Activated CD8-positive, alpha-beta T cell treated with anti-CD3 and anti-CD28 coated beads for 36 hours (primary cell): ENCODE measurements at regions of chr12 and their contacts with region 1.

Region 1: GRCh38 chr12:14995583-14996425 is 23.0 kb downstream of the PDE6H start:
- DNase-seq: no peak
- ATAC-seq: peak; percentile 51
- H3K4me3 Mint-ChIP-seq: no peak overlapping the region
- H3K27ac Mint-ChIP-seq: peak overlapping the region; percentile 61
- H3K4me1 Mint-ChIP-seq: peaks cover 24% of the 10 kb centered on the region
- H3K27me3 Mint-ChIP-seq: no peaks in the 10 kb centered on the region
- CTCF ChIP-seq: peak; percentile 61

Region 2: GRCh38 chr12:14723763-14724162 is 272.0 kb before region 1 on chr12:
- CTCF ChIA-PET with region 1: interaction called, 21 read pairs
- POLR2A ChIA-PET with region 1: no interaction called
- intact Hi-C with region 1: loop called (anchors 5 kb)
- DNase-seq: peak; percentile 70
- ATAC-seq: peak; percentile 77
- H3K4me3 Mint-ChIP-seq: no peak overlapping the region
- H3K27ac Mint-ChIP-seq: no peak overlapping the region
- H3K4me1 Mint-ChIP-seq: peaks cover 3% of the 10 kb centered on the region
- H3K27me3 Mint-ChIP-seq: peaks cover 10% of the 10 kb centered on the region
- CTCF ChIP-seq: peak; percentile 91

Region 3: GRCh38 chr12:14776236-14776961 is 219.4 kb before region 1 on chr12:
- CTCF ChIA-PET with region 1: interaction called, 13 read pairs
- POLR2A ChIA-PET with region 1: interaction called, 4 read pairs
- intact Hi-C with region 1: no loop called
- DNase-seq: no peak
- ATAC-seq: no peak
- H3K4me3 Mint-ChIP-seq: peak overlapping the region; percentile 92
- H3K27ac Mint-ChIP-seq: no peak overlapping the region
- H3K4me1 Mint-ChIP-seq: peaks cover 35% of the 10 kb centered on the region
- H3K27me3 Mint-ChIP-seq: no peaks in the 10 kb centered on the region
- CTCF ChIP-seq: peak; percentile 36

Region 4: GRCh38 chr12:14845350-14845750 is 150.5 kb before region 1 on chr12:
- CTCF ChIA-PET with region 1: interaction called, 95 read pairs
- POLR2A ChIA-PET with region 1: interaction called, 3 read pairs
- intact Hi-C with region 1: loop called (anchors 1 kb)
- DNase-seq: peak; percentile 65
- ATAC-seq: peak; percentile 76
- H3K4me3 Mint-ChIP-seq: no peak overlapping the region
- H3K27ac Mint-ChIP-seq: peak overlapping the region; percentile 43
- H3K4me1 Mint-ChIP-seq: peaks cover 12% of the 10 kb centered on the region
- H3K27me3 Mint-ChIP-seq: no peaks in the 10 kb centered on the region
- CTCF ChIP-seq: peak; percentile 68

Region 5: DNA sequence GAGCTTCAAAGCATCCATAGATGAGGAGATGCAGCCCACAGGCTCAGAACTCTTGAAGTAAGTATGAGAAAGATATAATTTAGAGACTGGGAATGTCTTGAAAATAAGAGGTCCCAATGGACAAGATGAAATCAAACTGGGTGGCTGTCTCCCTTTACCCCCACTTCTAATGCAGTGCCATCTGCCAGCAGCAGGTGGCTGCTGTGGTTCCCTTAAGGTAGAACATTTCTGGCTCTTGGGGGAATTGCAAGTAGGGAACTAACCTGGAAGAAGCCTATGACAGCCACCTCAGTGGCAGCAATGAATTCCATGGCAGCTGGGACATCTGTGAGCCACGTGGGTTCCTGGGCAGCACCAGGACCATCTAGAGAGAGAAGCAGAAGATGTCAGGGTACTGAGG is 58.1 kb before region 1 on chr12:
- CTCF ChIA-PET with region 1: interaction called, 14 read pairs
- POLR2A ChIA-PET with region 1: no interaction called
- intact Hi-C with region 1: no loop called
- DNase-seq: no peak
- ATAC-seq: peak; percentile 48
- H3K4me3 Mint-ChIP-seq: no peak overlapping the region
- H3K27ac Mint-ChIP-seq: peak overlapping the region; percentile 55
- H3K4me1 Mint-ChIP-seq: peaks cover 49% of the 10 kb centered on the region
- H3K27me3 Mint-ChIP-seq: no peaks in the 10 kb centered on the region
- CTCF ChIP-seq: no peak